Aorta (tissue), 5 donors: ENCODE measurements at regions of chr13 and their contacts with region 1.

Region 1: GRCh38 chr13:67977066-67977465 is 746.9 kb upstream of the PCDH9 start:
- DNase-seq: no peak
- ATAC-seq: no peak
- H3K4me3 ChIP-seq: no peak overlapping the region
- H3K27ac ChIP-seq: no peak overlapping the region
- H3K4me1 ChIP-seq: no peaks in the 10 kb centered on the region
- H3K27me3 ChIP-seq: no peaks in the 10 kb centered on the region

Region 2: GRCh38 chr13:68107667-68108066 is 130.6 kb after region 1 on chr13:
- intact Hi-C with region 1: no loop called
- DNase-seq: peak in 1 of 2 donors; percentile 66
- ATAC-seq: no peak
- H3K4me3 ChIP-seq: no peak overlapping the region
- H3K27ac ChIP-seq: no peak overlapping the region
- H3K4me1 ChIP-seq: no peaks in the 10 kb centered on the region
- H3K27me3 ChIP-seq: no peaks in the 10 kb centered on the region

Region 3: DNA sequence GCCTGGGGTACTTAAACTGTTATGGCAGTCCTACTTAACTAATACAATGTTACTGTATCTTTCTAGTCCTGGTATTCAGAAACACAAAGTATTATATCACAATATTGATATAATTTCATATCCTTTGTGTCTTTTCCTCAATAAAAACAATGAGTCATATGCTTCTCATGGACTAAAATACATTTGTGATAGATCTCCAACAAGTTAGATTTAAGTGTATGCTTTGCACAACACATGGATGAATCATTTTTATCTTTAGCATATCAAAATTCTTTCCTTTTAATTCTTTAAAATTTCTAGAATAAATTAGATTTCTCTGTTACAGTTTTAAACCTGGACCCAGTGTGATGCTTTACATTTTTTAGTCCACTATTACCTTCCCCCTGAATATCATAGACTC is 772.7 kb after region 1 on chr13:
- intact Hi-C with region 1: loop called in 1 of 2 experiments (anchors 10 kb)
- DNase-seq: no peak
- ATAC-seq: no peak
- H3K4me3 ChIP-seq: no peak overlapping the region
- H3K27ac ChIP-seq: no peak overlapping the region
- H3K4me1 ChIP-seq: no peaks in the 10 kb centered on the region
- H3K27me3 ChIP-seq: no peaks in the 10 kb centered on the region